ENCODE measurements at regions of chr16 and their contacts with region 1.

Region 1: GRCh38 chr16:10521681-10522274 is 58.6 kb downstream of the EMP2 start:
- DNase-seq: peak; percentile 68
- CTCF ChIP-seq: peak; percentile 49

Region 2: GRCh38 chr16:9874224-9874623 is 647.6 kb before region 1 on chr16:
- in situ Hi-C with region 1: no loop called
- DNase-seq: no peak
- CTCF ChIP-seq: no peak

Region 3: GRCh38 chr16:10729104-10730048 is 207.6 kb after region 1 on chr16:
- in situ Hi-C with region 1: loop called (anchors 5 kb)
- DNase-seq: no peak
- CTCF ChIP-seq: no peak

Region 4: DNA sequence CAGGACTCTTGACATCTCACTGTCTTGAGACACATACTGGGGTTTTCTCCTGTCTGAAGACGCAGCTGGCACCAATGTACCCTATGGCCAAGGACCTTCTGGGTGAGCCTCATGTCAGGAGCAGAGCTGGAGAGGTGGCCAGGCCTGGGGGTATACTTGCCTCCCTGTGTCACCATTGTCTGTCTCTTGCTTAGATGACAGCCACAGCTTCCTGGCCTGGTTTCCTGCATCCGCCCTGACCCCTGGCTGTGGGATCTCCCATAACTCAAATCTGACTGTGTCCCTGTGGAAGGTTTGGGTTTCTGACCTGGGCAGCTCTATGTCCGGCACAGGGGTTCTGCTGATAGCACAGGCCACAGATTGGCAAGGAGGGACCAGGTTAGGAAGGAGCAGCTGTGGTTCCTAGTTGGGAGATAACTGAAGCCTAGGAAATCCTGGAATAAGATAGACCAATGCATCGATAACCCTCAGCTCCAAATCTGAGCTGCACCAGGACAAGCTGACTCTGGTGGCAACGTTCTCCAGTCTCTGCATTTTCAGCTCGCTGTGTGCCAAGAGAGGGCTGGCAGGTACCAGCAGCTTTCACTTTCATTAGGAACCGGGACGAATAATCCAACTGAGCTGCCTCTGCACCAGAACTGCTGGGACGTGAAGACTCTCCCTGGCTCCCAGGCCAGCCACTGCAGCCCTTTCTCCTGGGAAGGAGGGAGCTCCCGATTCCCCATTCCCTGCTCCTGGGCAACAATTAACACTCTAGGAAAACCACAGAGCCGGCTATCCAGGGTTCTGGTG is 415.5 kb after region 1 on chr16:
- in situ Hi-C with region 1: loop called (anchors 10 kb)
- DNase-seq: no peak
- CTCF ChIP-seq: no peak

Measured in GM13976 (cell line).